CD4-positive, alpha-beta T cell (primary cell): ENCODE measurements at regions of chr1 and their contacts with region 1.

Region 1: GRCh38 chr1:87328272-87329050 is at the start of gene LMO4:
- DNase-seq: peak; percentile 51 to 92 (median 68)
- ATAC-seq: peak; percentile 56
- H3K4me3 ChIP-seq: peak within 1 kb of the TSS; percentile 81
- H3K4me3 Mint-ChIP-seq: peak within 1 kb of the TSS; percentile 98
- H3K27ac ChIP-seq: peak within 1 kb of the TSS; percentile 49 to 51
- H3K27ac Mint-ChIP-seq: peak within 1 kb of the TSS; percentile 88
- H3K4me1 ChIP-seq: peaks cover 34% of the 10 kb centered on the region
- H3K4me1 Mint-ChIP-seq: peaks cover 56% of the 10 kb centered on the region
- H3K27me3 ChIP-seq: peaks cover 0 to 7% of the 10 kb centered on the region in 2 experiments
- H3K27me3 Mint-ChIP-seq: peaks cover 21% of the 10 kb centered on the region
- CTCF ChIP-seq: no peak
- total RNA-seq, gene LMO4: 16.0 to 18.2 TPM

Region 2: GRCh38 chr1:86395771-86396497 is 932.5 kb before region 1 on chr1 and contains the start of gene ODF2L:
- CTCF ChIA-PET with region 1: no interaction called
- POLR2A ChIA-PET with region 1: interaction called, 5 read pairs
- intact Hi-C with region 1: loop called in 1 of 2 experiments (anchors 5 kb)
- DNase-seq: peak; percentile 77 to 95 (median 84)
- ATAC-seq: peak; percentile 97
- H3K4me3 ChIP-seq: peak within 1 kb of the TSS; percentile 67
- H3K4me3 Mint-ChIP-seq: peak within 1 kb of the TSS; percentile 93
- H3K27ac ChIP-seq: peak within 1 kb of the TSS; percentile 75 to 89
- H3K27ac Mint-ChIP-seq: peak within 1 kb of the TSS; percentile 96
- H3K4me1 ChIP-seq: peaks cover 19% of the 10 kb centered on the region
- H3K4me1 Mint-ChIP-seq: peaks cover 69% of the 10 kb centered on the region
- H3K27me3 ChIP-seq: no peaks in the 10 kb centered on the region
- H3K27me3 Mint-ChIP-seq: no peaks in the 10 kb centered on the region
- CTCF ChIP-seq: no peak
- total RNA-seq, gene ODF2L: 68.1 to 71.2 TPM

Region 3: GRCh38 chr1:87386217-87386790 is 57.8 kb after region 1 on chr1:
- CTCF ChIA-PET with region 1: no interaction called
- POLR2A ChIA-PET with region 1: no interaction called
- intact Hi-C with region 1: loop called in 1 of 2 experiments (anchors 5 kb)
- DNase-seq: no peak
- ATAC-seq: no peak
- H3K4me3 ChIP-seq: no peak overlapping the region
- H3K4me3 Mint-ChIP-seq: no peak overlapping the region
- H3K27ac ChIP-seq: no peak overlapping the region
- H3K27ac Mint-ChIP-seq: no peak overlapping the region
- H3K4me1 ChIP-seq: no peaks in the 10 kb centered on the region
- H3K4me1 Mint-ChIP-seq: no peaks in the 10 kb centered on the region
- H3K27me3 ChIP-seq: no peaks in the 10 kb centered on the region
- H3K27me3 Mint-ChIP-seq: peaks cover 19% of the 10 kb centered on the region
- CTCF ChIP-seq: no peak

Region 4: GRCh38 chr1:87449348-87449963 is 121.0 kb after region 1 on chr1:
- CTCF ChIA-PET with region 1: no interaction called
- POLR2A ChIA-PET with region 1: interaction called, 3 read pairs
- intact Hi-C with region 1: loop called in 1 of 2 experiments (anchors 2 kb)
- DNase-seq: peak in 6 of 14 experiments; percentile 4 to 53 (median 28)
- ATAC-seq: peak; percentile 61
- H3K4me3 ChIP-seq: peak overlapping the region; percentile 1
- H3K4me3 Mint-ChIP-seq: peak overlapping the region; percentile 52
- H3K27ac ChIP-seq: peak overlapping the region in 1 of 2 donors; percentile 57
- H3K27ac Mint-ChIP-seq: peak overlapping the region; percentile 73
- H3K4me1 ChIP-seq: peaks cover 3% of the 10 kb centered on the region
- H3K4me1 Mint-ChIP-seq: peaks cover 9% of the 10 kb centered on the region
- H3K27me3 ChIP-seq: no peaks in the 10 kb centered on the region
- H3K27me3 Mint-ChIP-seq: no peaks in the 10 kb centered on the region
- CTCF ChIP-seq: no peak

Region 5: DNA sequence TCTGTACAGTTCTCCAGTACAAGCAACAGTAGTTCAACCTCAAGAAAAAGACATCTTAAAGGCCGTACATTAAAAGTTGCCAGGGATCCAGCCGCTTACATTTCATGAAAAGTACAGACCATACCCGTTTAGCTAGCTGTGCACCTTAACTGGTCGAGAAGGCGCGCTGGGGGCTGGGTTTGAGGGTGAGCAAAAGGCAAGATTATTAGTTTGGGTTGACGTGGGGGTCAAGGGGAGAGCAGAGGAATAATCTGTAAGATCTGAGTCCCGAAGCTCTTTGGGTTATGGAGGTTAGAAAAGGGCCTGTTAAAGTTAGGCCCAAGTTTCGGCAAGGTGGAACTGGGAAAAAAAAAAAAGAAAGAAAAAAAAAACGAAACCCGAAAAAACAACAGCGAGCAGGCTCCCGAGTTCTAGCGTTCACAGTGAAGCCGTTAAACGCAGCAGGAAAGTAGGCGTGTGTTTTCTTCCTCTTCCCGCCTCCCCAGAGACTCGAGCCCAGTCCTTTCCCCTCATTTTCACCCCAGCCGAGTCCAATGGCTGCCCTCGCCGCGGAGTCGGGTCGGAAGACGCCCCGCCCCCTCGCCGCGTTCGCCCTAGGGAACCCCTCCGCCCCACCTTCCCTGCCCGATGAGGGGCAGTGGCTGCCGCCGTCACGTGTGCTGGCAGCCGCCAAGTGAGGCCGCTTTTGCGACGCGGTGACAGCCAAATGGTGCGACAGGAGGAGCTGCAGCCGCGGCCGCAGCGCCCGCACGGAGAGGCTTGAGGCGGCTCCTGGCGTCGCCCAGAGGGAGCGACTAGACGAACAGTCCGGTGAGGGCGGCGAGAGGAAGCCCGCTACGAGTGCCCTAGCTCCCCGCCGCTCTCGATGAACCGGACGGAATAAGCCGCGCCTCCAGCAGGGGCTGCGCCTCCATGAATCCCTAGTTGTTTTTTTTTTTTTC is 1355.3 kb after region 1 on chr1 and contains the start of gene PKN2:
- CTCF ChIA-PET with region 1: no interaction called
- POLR2A ChIA-PET with region 1: interaction called, 4 read pairs
- intact Hi-C with region 1: loop called in 1 of 2 experiments (anchors 5 kb)
- DNase-seq: peak; percentile 93 to 100 (median 96)
- ATAC-seq: peak; percentile 93
- H3K4me3 ChIP-seq: peak within 1 kb of the TSS; percentile 95
- H3K4me3 Mint-ChIP-seq: peak within 1 kb of the TSS; percentile 93
- H3K27ac ChIP-seq: peak within 1 kb of the TSS; percentile 92 to 94
- H3K27ac Mint-ChIP-seq: peak within 1 kb of the TSS; percentile 95
- H3K4me1 ChIP-seq: peaks cover 15% of the 10 kb centered on the region
- H3K4me1 Mint-ChIP-seq: peaks cover 45% of the 10 kb centered on the region
- H3K27me3 ChIP-seq: no peaks in the 10 kb centered on the region
- H3K27me3 Mint-ChIP-seq: no peaks in the 10 kb centered on the region
- CTCF ChIP-seq: peak; percentile 31
- total RNA-seq, gene PKN2: 38.8 to 41.4 TPM